ENCODE measurements at regions of chr12 and their contacts with region 1.

Region 1: GRCh38 chr12:116426391-116427136 is 132.6 kb upstream of the MAP1LC3B2 start:
- DNase-seq: peak; percentile 82 to 92
- H3K4me3 ChIP-seq: no peak overlapping the region
- H3K4me3 Mint-ChIP-seq: peak overlapping the region; percentile 64
- H3K27ac Mint-ChIP-seq: peak overlapping the region; percentile 84
- H3K4me1 ChIP-seq: peaks cover 45% of the 10 kb centered on the region
- H3K4me1 Mint-ChIP-seq: peaks cover 32% of the 10 kb centered on the region
- H3K27me3 ChIP-seq: no peaks in the 10 kb centered on the region
- H3K27me3 Mint-ChIP-seq: no peaks in the 10 kb centered on the region
- CTCF ChIP-seq: peak; percentile 36 to 50

Region 2: DNA sequence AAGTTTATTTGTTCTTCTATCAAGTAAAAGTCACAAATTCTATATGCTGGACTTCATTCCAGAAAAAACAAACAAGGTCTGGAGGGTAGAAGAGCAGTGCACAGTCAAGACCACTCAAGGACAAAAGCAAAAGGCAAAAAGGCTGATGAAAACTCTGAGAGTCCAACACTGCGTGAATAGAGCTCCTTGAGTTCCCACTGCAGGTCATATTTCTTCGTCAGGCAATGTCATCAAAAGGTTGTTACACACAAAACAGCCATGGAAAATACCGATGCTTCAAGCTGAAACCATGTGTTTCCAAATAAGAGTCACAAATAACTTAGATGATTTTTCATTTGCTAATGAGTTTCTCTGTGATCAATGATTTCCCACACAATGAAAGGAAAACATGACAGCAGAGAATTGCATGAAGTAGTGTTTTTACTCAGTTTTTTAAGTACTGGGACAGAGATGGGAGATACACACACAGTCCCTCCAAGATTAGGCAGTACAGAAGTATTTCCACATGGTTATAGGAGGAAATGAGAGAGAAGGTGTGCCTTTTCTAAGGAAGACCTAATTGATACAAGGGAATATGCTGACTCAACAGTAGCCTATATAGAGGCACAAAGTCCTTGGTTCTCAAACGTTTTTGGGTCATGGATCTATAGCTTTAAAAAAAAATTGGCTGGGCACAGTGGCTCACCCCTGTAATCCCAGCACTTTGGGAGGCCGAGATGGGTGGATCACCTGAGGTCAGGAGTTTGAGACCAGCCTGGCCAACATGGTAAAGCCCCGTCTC is 326.7 kb before region 1 on chr12:
- CTCF ChIA-PET with region 1: no interaction called
- POLR2A ChIA-PET with region 1: no interaction called
- intact Hi-C with region 1: no loop called
- DNase-seq: no peak
- H3K4me3 ChIP-seq: no peak overlapping the region
- H3K4me3 Mint-ChIP-seq: no peak overlapping the region
- H3K27ac Mint-ChIP-seq: no peak overlapping the region
- H3K4me1 ChIP-seq: no peaks in the 10 kb centered on the region
- H3K4me1 Mint-ChIP-seq: peaks cover 9% of the 10 kb centered on the region
- H3K27me3 ChIP-seq: no peaks in the 10 kb centered on the region
- H3K27me3 Mint-ChIP-seq: no peaks in the 10 kb centered on the region
- CTCF ChIP-seq: no peak

Region 3: GRCh38 chr12:116294454-116295165 is 132.0 kb before region 1 on chr12:
- CTCF ChIA-PET with region 1: no interaction called
- POLR2A ChIA-PET with region 1: no interaction called
- intact Hi-C with region 1: loop called (anchors 5 kb)
- DNase-seq: no peak
- H3K4me3 ChIP-seq: no peak overlapping the region
- H3K4me3 Mint-ChIP-seq: no peak overlapping the region
- H3K27ac Mint-ChIP-seq: no peak overlapping the region
- H3K4me1 ChIP-seq: peaks cover 22% of the 10 kb centered on the region
- H3K4me1 Mint-ChIP-seq: peaks cover 16% of the 10 kb centered on the region
- H3K27me3 ChIP-seq: no peaks in the 10 kb centered on the region
- H3K27me3 Mint-ChIP-seq: no peaks in the 10 kb centered on the region
- CTCF ChIP-seq: no peak

Region 4: GRCh38 chr12:116358893-116359761 is 67.4 kb before region 1 on chr12:
- CTCF ChIA-PET with region 1: no interaction called
- POLR2A ChIA-PET with region 1: no interaction called
- intact Hi-C with region 1: no loop called
- DNase-seq: peak; percentile 90 to 94
- H3K4me3 ChIP-seq: no peak overlapping the region
- H3K4me3 Mint-ChIP-seq: peak overlapping the region; percentile 50
- H3K27ac Mint-ChIP-seq: peak overlapping the region; percentile 88
- H3K4me1 ChIP-seq: peaks cover 13% of the 10 kb centered on the region
- H3K4me1 Mint-ChIP-seq: peaks cover 21% of the 10 kb centered on the region
- H3K27me3 ChIP-seq: no peaks in the 10 kb centered on the region
- H3K27me3 Mint-ChIP-seq: no peaks in the 10 kb centered on the region
- CTCF ChIP-seq: no peak

Region 5: DNA sequence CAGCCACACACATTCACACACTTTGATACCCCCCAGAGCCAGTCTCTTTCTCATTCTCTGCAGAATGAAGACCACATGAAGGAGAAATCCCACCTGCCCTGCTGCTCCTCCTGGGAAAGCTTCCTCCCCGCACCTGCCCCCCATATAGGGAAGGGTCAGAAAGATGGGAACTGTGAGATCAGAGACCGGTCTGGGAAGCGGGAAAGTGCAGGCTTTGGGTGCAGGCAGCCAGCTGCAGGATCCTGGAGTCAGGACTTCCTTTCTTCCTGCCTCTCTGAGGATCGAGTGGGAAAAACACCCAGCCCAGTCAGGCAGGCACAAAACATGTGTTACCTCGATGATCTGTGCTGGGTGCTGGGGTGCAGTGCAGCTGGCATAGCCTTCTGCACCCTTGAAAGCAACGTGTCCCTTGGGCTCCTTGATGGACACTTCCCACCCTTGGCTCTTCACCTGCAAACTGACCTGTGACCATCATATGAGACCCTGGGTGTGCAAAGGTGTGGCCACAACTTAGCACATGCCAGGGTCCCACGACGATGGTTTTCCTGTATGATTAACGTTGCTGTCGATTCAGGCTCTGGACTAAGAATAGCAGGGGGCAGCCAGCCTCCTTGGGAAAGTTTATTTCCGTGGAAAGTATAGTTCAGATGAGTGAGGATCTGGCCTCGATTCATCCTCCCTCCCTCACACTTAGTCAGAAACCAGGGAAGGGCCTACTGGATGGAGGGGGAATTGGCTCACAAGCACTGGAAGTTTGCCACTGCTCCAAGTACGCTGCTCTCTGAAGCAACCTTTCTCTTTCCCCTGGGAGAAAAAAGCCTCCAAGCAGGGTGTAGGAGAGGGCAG is 43.7 kb before region 1 on chr12:
- CTCF ChIA-PET with region 1: no interaction called
- POLR2A ChIA-PET with region 1: no interaction called
- intact Hi-C with region 1: loop called (anchors 2 kb)
- DNase-seq: no peak
- H3K4me3 ChIP-seq: no peak overlapping the region
- H3K4me3 Mint-ChIP-seq: peak overlapping the region; percentile 55
- H3K27ac Mint-ChIP-seq: peak overlapping the region; percentile 78
- H3K4me1 ChIP-seq: peaks cover 56% of the 10 kb centered on the region
- H3K4me1 Mint-ChIP-seq: peaks cover 26% of the 10 kb centered on the region
- H3K27me3 ChIP-seq: no peaks in the 10 kb centered on the region
- H3K27me3 Mint-ChIP-seq: no peaks in the 10 kb centered on the region
- CTCF ChIP-seq: no peak

Region 6: GRCh38 chr12:116473416-116473815 is 46.9 kb after region 1 on chr12:
- CTCF ChIA-PET with region 1: no interaction called
- POLR2A ChIA-PET with region 1: no interaction called
- intact Hi-C with region 1: loop called (anchors 1 kb)
- DNase-seq: no peak
- H3K4me3 ChIP-seq: no peak overlapping the region
- H3K4me3 Mint-ChIP-seq: no peak overlapping the region
- H3K27ac Mint-ChIP-seq: no peak overlapping the region
- H3K4me1 ChIP-seq: no peaks in the 10 kb centered on the region
- H3K4me1 Mint-ChIP-seq: no peaks in the 10 kb centered on the region
- H3K27me3 ChIP-seq: no peaks in the 10 kb centered on the region
- H3K27me3 Mint-ChIP-seq: no peaks in the 10 kb centered on the region
- CTCF ChIP-seq: no peak

Region 7: GRCh38 chr12:116502952-116503542 is 76.5 kb after region 1 on chr12:
- CTCF ChIA-PET with region 1: interaction called, 3 read pairs
- POLR2A ChIA-PET with region 1: no interaction called
- intact Hi-C with region 1: loop called (anchors 1 kb)
- DNase-seq: peak; percentile 92 to 96
- H3K4me3 ChIP-seq: no peak overlapping the region
- H3K4me3 Mint-ChIP-seq: peak overlapping the region; percentile 49
- H3K27ac Mint-ChIP-seq: peak overlapping the region; percentile 91
- H3K4me1 ChIP-seq: peaks cover 35% of the 10 kb centered on the region
- H3K4me1 Mint-ChIP-seq: peaks cover 31% of the 10 kb centered on the region
- H3K27me3 ChIP-seq: no peaks in the 10 kb centered on the region
- H3K27me3 Mint-ChIP-seq: no peaks in the 10 kb centered on the region
- CTCF ChIP-seq: no peak

Region 8: GRCh38 chr12:116636701-116637519 is 210.3 kb after region 1 on chr12:
- CTCF ChIA-PET with region 1: no interaction called
- POLR2A ChIA-PET with region 1: no interaction called
- intact Hi-C with region 1: loop called (anchors 1 kb)
- DNase-seq: peak; percentile 64 to 65
- H3K4me3 ChIP-seq: no peak overlapping the region
- H3K4me3 Mint-ChIP-seq: peak overlapping the region; percentile 63
- H3K27ac Mint-ChIP-seq: peak overlapping the region; percentile 87
- H3K4me1 ChIP-seq: peaks cover 63% of the 10 kb centered on the region
- H3K4me1 Mint-ChIP-seq: peaks cover 40% of the 10 kb centered on the region
- H3K27me3 ChIP-seq: no peaks in the 10 kb centered on the region
- H3K27me3 Mint-ChIP-seq: no peaks in the 10 kb centered on the region
- CTCF ChIP-seq: no peak

Region 9: GRCh38 chr12:116737774-116738700 is 311.5 kb after region 1 on chr12 and contains the starts of genes RNFT2 and SPRING1:
- CTCF ChIA-PET with region 1: no interaction called
- POLR2A ChIA-PET with region 1: no interaction called
- intact Hi-C with region 1: no loop called
- DNase-seq: peak; percentile 99
- H3K4me3 ChIP-seq: peak within 1 kb of the TSS; percentile 93
- H3K4me3 Mint-ChIP-seq: peak within 1 kb of the TSS; percentile 96
- H3K27ac Mint-ChIP-seq: peak within 1 kb of the TSS; percentile 78
- H3K4me1 ChIP-seq: peaks cover 26% of the 10 kb centered on the region
- H3K4me1 Mint-ChIP-seq: peaks cover 19% of the 10 kb centered on the region
- H3K27me3 ChIP-seq: no peaks in the 10 kb centered on the region
- H3K27me3 Mint-ChIP-seq: no peaks in the 10 kb centered on the region
- CTCF ChIP-seq: peak in 1 of 2 experiments; percentile 1
- total RNA-seq, gene RNFT2: 10.5 and 11.6 TPM in 2 replicates
- total RNA-seq, gene SPRING1: 68.5 and 69.6 TPM in 2 replicates